ENCODE measurements at regions of chr7 and their contacts with region 1.

Region 1: DNA sequence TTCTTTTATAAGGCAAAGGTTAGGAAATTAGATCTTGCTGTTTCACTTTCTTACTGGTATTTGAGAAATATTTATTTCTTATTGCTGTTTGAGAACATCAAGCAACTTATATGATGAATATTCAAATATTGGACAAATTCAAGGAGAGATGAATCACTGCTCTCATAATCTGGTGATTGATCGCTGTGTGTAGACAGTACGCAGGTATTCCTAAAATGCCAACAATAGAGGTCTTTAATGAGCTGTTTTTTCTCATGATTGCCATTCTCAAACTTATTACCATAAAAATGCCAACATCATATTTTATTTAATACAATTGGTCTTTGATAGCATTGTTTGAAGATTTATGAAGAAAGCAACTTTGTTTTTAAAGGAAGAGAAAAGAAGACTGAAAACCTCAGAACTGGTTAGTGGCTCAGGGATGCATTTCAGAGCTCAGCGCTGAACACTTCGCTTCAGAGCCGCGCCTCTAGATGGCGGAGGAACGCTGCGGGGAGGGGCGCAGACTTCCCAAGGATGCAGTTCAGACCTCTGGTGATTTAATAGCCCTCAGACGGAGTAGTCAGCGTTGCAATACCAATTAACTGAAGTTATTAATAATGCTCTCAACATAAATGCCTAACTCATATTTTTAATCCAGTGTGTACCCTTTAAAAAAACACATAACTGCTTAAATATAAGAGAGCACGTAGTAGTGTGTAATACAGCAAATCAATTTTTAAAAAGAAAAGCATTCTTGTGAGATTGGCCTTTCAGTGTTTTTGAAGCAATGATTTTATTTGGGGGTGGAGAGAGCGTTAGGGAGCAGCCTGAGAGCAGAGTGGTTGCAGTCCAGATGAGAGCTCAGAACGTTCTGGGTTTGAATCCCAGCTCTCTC is 38.5 kb upstream of the STEAP4 start:
- DNase-seq: no peak
- ATAC-seq: no peak
- H3K4me3 Mint-ChIP-seq: no peak overlapping the region
- H3K27ac Mint-ChIP-seq: no peak overlapping the region
- H3K4me1 Mint-ChIP-seq: peaks cover 6% of the 10 kb centered on the region
- H3K27me3 Mint-ChIP-seq: peaks cover 2% of the 10 kb centered on the region
- CTCF ChIP-seq: no peak

Region 2: GRCh38 chr7:86592185-86592584 is 1753.0 kb before region 1 on chr7:
- CTCF ChIA-PET with region 1: no interaction called
- POLR2A ChIA-PET with region 1: no interaction called
- intact Hi-C with region 1: no loop called
- DNase-seq: no peak
- ATAC-seq: no peak
- H3K4me3 Mint-ChIP-seq: no peak overlapping the region
- H3K27ac Mint-ChIP-seq: no peak overlapping the region
- H3K4me1 Mint-ChIP-seq: no peaks in the 10 kb centered on the region
- H3K27me3 Mint-ChIP-seq: no peaks in the 10 kb centered on the region
- CTCF ChIP-seq: no peak

Region 3: GRCh38 chr7:88101769-88102168 is 243.4 kb before region 1 on chr7:
- CTCF ChIA-PET with region 1: no interaction called
- POLR2A ChIA-PET with region 1: no interaction called
- intact Hi-C with region 1: no loop called
- DNase-seq: no peak
- ATAC-seq: no peak
- H3K4me3 Mint-ChIP-seq: no peak overlapping the region
- H3K27ac Mint-ChIP-seq: no peak overlapping the region
- H3K4me1 Mint-ChIP-seq: no peaks in the 10 kb centered on the region
- H3K27me3 Mint-ChIP-seq: no peaks in the 10 kb centered on the region
- CTCF ChIP-seq: no peak

Region 4: GRCh38 chr7:88306590-88307048 is 38.6 kb before region 1 on chr7 and contains the start of gene STEAP4:
- CTCF ChIA-PET with region 1: no interaction called
- POLR2A ChIA-PET with region 1: no interaction called
- intact Hi-C with region 1: no loop called
- DNase-seq: no peak
- ATAC-seq: no peak
- H3K4me3 Mint-ChIP-seq: no peak within 1 kb of the TSS
- H3K27ac Mint-ChIP-seq: no peak within 1 kb of the TSS
- H3K4me1 Mint-ChIP-seq: peaks cover 4% of the 10 kb centered on the region
- H3K27me3 Mint-ChIP-seq: peaks cover 10% of the 10 kb centered on the region
- CTCF ChIP-seq: no peak
- total RNA-seq, gene STEAP4: 0.09 and 0.17 TPM in 2 replicates

Region 5: GRCh38 chr7:88546808-88547207 is 201.6 kb after region 1 on chr7:
- CTCF ChIA-PET with region 1: no interaction called
- POLR2A ChIA-PET with region 1: no interaction called
- intact Hi-C with region 1: no loop called
- DNase-seq: no peak
- ATAC-seq: no peak
- H3K4me3 Mint-ChIP-seq: no peak overlapping the region
- H3K27ac Mint-ChIP-seq: no peak overlapping the region
- H3K4me1 Mint-ChIP-seq: no peaks in the 10 kb centered on the region
- H3K27me3 Mint-ChIP-seq: no peaks in the 10 kb centered on the region
- CTCF ChIP-seq: no peak

Region 6: DNA sequence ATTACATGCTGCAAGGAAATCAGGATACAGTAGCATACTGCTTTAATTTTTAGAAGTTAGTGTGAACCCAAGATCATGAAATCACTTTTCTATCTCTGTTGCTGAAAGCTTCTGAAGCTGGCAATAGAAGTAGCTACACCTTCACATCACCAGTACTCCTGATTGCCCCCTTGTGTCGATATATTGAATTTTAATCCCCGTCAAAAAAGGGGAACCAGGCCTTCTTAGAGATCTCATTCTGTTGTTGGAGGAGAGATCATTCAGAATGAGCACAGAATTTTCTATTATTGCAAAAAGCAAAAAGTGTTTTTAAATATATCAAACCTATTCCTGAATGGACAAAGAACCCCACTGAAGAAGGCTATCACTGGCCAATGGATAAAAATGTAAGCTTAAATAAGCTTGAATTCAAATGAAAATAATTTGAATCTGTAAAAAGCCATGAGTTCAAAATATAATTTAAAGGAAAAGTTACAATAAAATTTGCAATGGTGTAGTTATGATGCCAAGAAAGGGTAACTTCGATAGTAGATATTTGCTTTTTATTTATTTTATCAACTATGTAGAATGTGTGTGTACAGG is 490.0 kb after region 1 on chr7:
- CTCF ChIA-PET with region 1: interaction called, 3 read pairs
- POLR2A ChIA-PET with region 1: no interaction called
- intact Hi-C with region 1: loop called (anchors 5 kb)
- DNase-seq: no peak
- ATAC-seq: no peak
- H3K4me3 Mint-ChIP-seq: no peak overlapping the region
- H3K27ac Mint-ChIP-seq: no peak overlapping the region
- H3K4me1 Mint-ChIP-seq: no peaks in the 10 kb centered on the region
- H3K27me3 Mint-ChIP-seq: no peaks in the 10 kb centered on the region
- CTCF ChIP-seq: no peak

Measured in activated B cell treated with CpG ODN at 0.5 μM for 24 hours (primary cell).